ENCODE measurements at regions of chr2 and their contacts with region 1.

Region 1: GRCh38 chr2:150528861-150529801 is 41.7 kb upstream of the RND3 start:
- DNase-seq: no peak
- ATAC-seq: no peak
- H3K4me3 ChIP-seq: no peak overlapping the region
- H3K27ac ChIP-seq: no peak overlapping the region
- H3K4me1 ChIP-seq: no peaks in the 10 kb centered on the region
- H3K27me3 ChIP-seq: no peaks in the 10 kb centered on the region
- CTCF ChIP-seq: no peak

Region 2: GRCh38 chr2:149342523-149342922 is 1186.6 kb before region 1 on chr2:
- intact Hi-C with region 1: loop called in 1 of 10 experiments (anchors 5 kb)
- DNase-seq: no peak
- ATAC-seq: no peak
- H3K4me3 ChIP-seq: no peak overlapping the region
- H3K27ac ChIP-seq: no peak overlapping the region
- H3K4me1 ChIP-seq: no peaks in the 10 kb centered on the region
- H3K27me3 ChIP-seq: peaks cover 0 to 8% (median 0%) of the 10 kb centered on the region in 7 donors
- CTCF ChIP-seq: no peak

Region 3: DNA sequence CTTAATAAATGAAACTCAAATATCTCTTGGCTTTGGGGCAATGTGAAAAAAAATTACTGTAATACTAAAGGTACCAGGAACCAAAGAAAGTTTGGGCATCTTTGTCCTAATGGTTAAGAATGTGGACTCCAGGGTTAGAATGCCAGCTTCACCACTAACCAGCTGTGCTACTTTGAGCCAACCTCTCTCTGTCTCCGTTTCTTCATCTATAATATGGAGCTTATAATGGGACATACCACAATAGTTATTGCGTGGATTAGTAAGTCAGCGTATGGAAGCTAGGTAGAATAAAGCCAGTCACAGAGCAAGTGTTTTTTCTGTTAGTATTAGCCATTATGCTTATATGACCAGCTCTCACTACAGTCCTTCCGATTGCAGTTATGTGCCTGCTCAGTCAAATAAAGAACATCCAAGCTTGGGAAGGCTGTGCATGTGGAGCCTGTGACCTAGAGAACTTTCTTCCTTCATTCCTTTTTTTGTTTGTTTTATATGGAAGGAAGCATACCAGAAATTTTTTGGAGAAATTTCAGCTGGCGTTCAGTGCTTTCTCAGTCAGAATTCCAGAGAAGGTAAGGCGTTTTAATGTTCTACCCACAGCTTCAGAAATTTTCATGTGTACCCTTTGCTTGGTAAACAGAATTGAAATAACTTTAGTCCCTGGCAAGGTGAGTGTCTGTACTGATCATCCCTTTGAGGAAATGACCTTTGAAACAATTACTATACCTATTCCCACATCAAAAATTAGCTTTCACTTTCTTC is 72.3 kb after region 1 on chr2:
- intact Hi-C with region 1: loop called in 1 of 10 experiments (anchors 10 kb)
- DNase-seq: no peak
- ATAC-seq: no peak
- H3K4me3 ChIP-seq: no peak overlapping the region
- H3K27ac ChIP-seq: no peak overlapping the region
- H3K4me1 ChIP-seq: peaks cover 0 to 5% (median 0%) of the 10 kb centered on the region in 9 donors
- H3K27me3 ChIP-seq: no peaks in the 10 kb centered on the region
- CTCF ChIP-seq: no peak